ENCODE measurements at regions of chr12 and their contacts with region 1.

Region 1: GRCh38 chr12:68364893-68365725 is 32.9 kb upstream of the MDM1 start:
- DNase-seq: peak; percentile 85 to 97
- H3K4me3 ChIP-seq: peak overlapping the region; percentile 38 to 58
- H3K27ac ChIP-seq: peak overlapping the region; percentile 74 to 86
- H3K4me1 ChIP-seq: peaks cover 0 to 4% of the 10 kb centered on the region in 2 donors
- H3K27me3 ChIP-seq: no peaks in the 10 kb centered on the region
- CTCF ChIP-seq: no peak

Region 2: DNA sequence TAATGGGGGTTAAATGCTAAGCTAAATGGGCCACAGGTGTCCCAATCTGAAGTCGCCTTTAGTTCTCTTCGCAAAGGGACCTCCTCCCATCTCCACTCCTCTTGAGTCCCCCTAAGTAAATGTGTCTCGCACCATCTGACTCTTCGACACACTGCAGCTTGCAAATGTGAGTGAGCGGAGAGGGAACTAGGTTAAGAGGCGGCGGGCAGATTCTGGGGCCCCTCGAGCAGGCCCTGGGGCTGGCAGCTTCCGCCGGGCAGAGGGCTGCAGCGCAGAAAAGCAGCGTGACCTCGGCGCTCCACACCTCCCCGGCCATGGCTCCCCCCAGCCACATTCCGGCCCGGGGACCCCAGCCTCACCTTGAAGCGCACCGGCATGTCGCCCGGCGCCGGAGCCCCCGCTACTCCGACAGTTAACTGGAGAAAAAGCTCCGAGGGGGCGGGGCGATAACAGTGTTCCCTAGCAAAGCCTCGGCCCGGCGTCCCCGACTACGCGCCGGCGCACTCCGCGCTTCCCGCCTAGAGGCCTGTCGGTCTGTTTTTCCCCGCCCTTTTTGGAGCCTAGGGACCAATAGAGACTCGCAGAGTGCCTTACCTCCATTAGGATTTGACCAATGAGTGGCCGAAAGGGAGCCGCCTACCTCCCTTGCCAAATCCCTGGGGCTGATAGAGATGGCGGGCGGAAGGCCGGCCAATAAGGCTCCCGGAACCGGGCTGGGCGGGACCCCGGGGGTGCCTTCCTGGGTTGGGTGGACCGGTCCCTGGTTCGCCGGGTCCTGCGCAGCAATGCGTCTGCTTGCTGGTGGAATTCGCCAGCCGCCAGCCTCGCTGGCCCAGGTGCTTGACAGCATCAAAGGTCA is 33.0 kb before region 1 on chr12 and contains the start of gene MDM1:
- intact Hi-C with region 1: loop called (anchors 2 kb)
- DNase-seq: peak; percentile 94 to 99
- H3K4me3 ChIP-seq: peak within 1 kb of the TSS; percentile 77 to 88
- H3K27ac ChIP-seq: peak within 1 kb of the TSS; percentile 58 to 66
- H3K4me1 ChIP-seq: peaks cover 0 to 8% of the 10 kb centered on the region in 2 donors
- H3K27me3 ChIP-seq: no peaks in the 10 kb centered on the region
- CTCF ChIP-seq: no peak
- total RNA-seq, gene MDM1: 9.5 TPM

Region 3: DNA sequence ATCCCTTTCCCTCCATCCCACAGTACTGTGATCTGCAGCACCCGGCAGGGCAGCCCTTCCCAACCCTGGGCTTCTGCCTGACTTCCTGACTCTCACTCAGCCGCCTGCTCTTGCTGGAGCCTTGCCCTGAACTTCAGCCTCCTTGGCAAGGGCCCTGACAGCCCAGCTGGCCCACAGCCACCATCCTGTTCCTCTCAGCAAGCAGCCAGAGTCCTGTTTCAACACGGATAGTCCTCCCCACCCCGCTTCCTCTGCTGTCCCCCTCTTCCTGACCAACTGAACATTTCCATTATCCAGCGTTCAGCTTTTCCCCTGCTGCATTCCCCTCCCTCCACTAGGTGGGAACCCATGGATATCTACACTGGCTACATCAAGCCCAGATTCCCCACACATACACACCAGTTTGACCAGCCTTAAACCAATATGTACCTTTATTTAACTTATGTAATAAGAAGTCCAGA is 41.1 kb after region 1 on chr12:
- intact Hi-C with region 1: loop called (anchors 5 kb)
- DNase-seq: peak; percentile 58 to 94
- H3K4me3 ChIP-seq: peak overlapping the region; percentile 4 to 22
- H3K27ac ChIP-seq: peak overlapping the region in 1 of 2 donors; percentile 66
- H3K4me1 ChIP-seq: peaks cover 0 to 15% of the 10 kb centered on the region in 2 donors
- H3K27me3 ChIP-seq: no peaks in the 10 kb centered on the region
- CTCF ChIP-seq: peak; percentile 13 to 38 (median 36)

Region 4: DNA sequence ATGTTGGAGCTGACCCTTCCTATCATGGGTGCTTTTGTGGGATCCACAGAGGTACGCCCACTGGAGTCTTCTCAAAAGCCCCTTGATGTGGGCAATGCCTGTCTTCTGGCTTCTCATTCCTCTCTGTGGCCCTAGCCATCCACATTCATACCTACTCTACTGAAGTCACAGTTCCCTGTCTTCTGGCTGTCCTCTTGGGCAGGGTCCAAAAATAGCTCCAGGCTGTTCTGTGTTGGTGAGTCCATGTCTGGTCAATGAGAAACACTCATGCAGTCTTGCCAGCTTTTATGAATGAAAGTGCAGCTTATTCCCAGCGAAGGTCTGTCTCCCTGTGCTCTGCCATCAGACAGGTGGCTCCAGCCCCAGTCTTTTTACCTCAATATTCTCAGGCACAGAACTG is 102.9 kb after region 1 on chr12:
- intact Hi-C with region 1: no loop called
- DNase-seq: no peak
- H3K4me3 ChIP-seq: no peak overlapping the region
- H3K27ac ChIP-seq: no peak overlapping the region
- H3K4me1 ChIP-seq: no peaks in the 10 kb centered on the region
- H3K27me3 ChIP-seq: no peaks in the 10 kb centered on the region
- CTCF ChIP-seq: no peak

Measured in ascending aorta (tissue), 2 donors.